ENCODE measurements at regions of chr11 and their contacts with region 1.

Region 1: DNA sequence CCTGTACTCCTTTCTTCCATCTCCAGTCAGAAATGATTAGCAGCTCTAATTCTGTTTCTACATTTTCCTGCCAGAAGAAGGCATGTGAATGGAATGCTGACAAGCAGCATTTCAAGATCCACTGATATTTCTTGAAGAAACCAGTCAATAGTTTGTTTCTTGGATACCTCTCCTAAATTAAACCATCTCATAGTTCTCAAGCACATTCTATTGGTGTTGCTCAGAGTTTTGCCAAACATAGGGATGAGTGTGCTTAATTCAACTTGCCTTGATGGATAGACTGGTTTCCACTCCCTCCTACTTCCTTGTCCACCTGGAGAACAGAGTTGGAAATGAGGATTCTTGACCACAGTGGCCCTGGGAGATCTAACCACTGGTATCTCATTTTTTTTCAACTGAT is 29.8 kb upstream of the DDX10 start:
- DNase-seq: no peak
- H3K4me3 ChIP-seq: no peak overlapping the region
- H3K4me1 ChIP-seq: peaks cover 12% of the 10 kb centered on the region
- H3K27me3 ChIP-seq: no peaks in the 10 kb centered on the region

Region 2: DNA sequence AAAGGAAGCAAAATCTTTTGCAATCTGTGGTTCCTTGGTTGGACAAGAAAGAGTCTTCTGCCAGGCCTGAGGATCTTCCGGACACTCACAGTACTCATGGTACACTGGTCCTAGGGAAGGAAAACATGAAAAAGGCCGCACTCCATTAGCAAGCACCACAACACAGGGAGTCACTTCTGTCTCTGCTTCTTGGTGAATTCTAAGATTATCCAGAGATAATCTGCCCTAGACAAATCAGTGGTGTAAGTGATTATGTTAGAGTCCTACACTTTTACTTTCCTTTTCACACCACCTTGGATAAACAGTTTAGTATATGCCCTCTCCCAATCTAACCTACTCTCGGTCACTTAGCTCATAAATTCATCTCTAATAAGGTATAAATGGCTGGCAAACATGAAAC is 148.7 kb before region 1 on chr11:
- in situ Hi-C with region 1: loop called (anchors 5 kb)
- DNase-seq: no peak
- H3K4me3 ChIP-seq: no peak overlapping the region
- H3K4me1 ChIP-seq: peaks cover 5% of the 10 kb centered on the region; the same call in 1 of the 2 replicates
- H3K27me3 ChIP-seq: no peaks in the 10 kb centered on the region

Region 3: DNA sequence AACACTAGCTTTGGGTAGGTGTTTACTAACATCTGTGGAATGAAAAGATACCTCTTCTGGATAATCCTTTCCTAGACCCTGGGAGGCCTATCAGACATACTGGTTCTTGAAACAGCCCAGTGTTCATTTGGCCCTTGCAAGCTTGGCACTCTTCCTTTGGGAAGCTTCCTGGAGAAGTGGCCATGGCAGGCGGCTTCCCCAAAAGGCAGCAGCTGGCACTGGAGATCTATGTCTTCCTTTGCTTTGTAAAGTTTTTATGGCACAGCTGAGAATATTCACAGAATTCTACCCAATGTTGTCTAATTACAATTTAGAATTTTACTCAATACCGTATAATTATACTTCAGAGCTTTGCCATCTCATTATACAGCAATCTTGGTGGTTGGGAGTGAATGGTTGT is 587.7 kb after region 1 on chr11:
- in situ Hi-C with region 1: no loop called
- DNase-seq: no peak
- H3K4me3 ChIP-seq: no peak overlapping the region
- H3K4me1 ChIP-seq: no peaks in the 10 kb centered on the region
- H3K27me3 ChIP-seq: no peaks in the 10 kb centered on the region

Measured in HAP-1 (cell line).